ENCODE measurements at regions of chr12 and their contacts with region 1.

Region 1: GRCh38 chr12:54214553-54215406 is 26.0 kb upstream of the SMUG1 start:
- DNase-seq: peak; percentile 93
- H3K4me3 Mint-ChIP-seq: peak overlapping the region; percentile 85
- H3K27ac Mint-ChIP-seq: peak overlapping the region; percentile 68
- H3K4me1 Mint-ChIP-seq: peaks cover 47% of the 10 kb centered on the region
- H3K27me3 Mint-ChIP-seq: peaks cover 22% of the 10 kb centered on the region

Region 2: GRCh38 chr12:54005853-54006686 is 208.7 kb before region 1 on chr12:
- CTCF ChIA-PET with region 1: interaction called, 57 read pairs
- POLR2A ChIA-PET with region 1: interaction called, 3 read pairs
- DNase-seq: peak; percentile 85
- H3K4me3 Mint-ChIP-seq: peak overlapping the region; percentile 66
- H3K27ac Mint-ChIP-seq: no peak overlapping the region
- H3K4me1 Mint-ChIP-seq: peaks cover 25% of the 10 kb centered on the region
- H3K27me3 Mint-ChIP-seq: peaks cover 95% of the 10 kb centered on the region

Region 3: GRCh38 chr12:54147186-54147585 is 67.6 kb before region 1 on chr12:
- CTCF ChIA-PET with region 1: no interaction called
- POLR2A ChIA-PET with region 1: no interaction called
- DNase-seq: no peak
- H3K4me3 Mint-ChIP-seq: no peak overlapping the region
- H3K27ac Mint-ChIP-seq: no peak overlapping the region
- H3K4me1 Mint-ChIP-seq: no peaks in the 10 kb centered on the region
- H3K27me3 Mint-ChIP-seq: peaks cover 18% of the 10 kb centered on the region

Region 4: DNA sequence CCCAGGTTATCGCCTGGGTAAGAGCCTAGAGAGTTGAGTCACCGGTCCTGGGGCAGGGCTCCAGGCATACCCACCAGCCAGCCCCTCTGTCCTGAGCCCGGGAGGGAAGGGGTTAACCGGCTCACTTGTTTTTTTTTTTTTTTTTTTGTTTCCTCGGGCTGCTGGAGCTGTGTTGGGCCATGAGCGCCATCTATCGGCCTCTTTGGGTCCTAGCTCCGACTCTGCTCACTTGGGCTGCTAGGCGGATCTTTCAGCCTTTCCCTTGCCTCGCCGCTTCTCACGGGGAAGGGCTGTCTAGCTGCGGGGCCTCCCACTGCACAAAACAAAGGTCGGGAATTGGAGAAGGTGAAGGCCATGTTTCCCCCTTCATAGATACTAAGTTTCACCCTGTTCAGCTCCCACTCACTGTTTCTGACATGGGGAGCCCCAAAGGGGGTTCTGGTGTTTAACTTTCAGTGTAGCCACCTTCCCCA is 23.2 kb before region 1 on chr12:
- CTCF ChIA-PET with region 1: interaction called, 79 read pairs
- POLR2A ChIA-PET with region 1: no interaction called
- DNase-seq: peak; percentile 81
- H3K4me3 Mint-ChIP-seq: no peak overlapping the region
- H3K27ac Mint-ChIP-seq: no peak overlapping the region
- H3K4me1 Mint-ChIP-seq: peaks cover 24% of the 10 kb centered on the region
- H3K27me3 Mint-ChIP-seq: peaks cover 49% of the 10 kb centered on the region

Region 5: DNA sequence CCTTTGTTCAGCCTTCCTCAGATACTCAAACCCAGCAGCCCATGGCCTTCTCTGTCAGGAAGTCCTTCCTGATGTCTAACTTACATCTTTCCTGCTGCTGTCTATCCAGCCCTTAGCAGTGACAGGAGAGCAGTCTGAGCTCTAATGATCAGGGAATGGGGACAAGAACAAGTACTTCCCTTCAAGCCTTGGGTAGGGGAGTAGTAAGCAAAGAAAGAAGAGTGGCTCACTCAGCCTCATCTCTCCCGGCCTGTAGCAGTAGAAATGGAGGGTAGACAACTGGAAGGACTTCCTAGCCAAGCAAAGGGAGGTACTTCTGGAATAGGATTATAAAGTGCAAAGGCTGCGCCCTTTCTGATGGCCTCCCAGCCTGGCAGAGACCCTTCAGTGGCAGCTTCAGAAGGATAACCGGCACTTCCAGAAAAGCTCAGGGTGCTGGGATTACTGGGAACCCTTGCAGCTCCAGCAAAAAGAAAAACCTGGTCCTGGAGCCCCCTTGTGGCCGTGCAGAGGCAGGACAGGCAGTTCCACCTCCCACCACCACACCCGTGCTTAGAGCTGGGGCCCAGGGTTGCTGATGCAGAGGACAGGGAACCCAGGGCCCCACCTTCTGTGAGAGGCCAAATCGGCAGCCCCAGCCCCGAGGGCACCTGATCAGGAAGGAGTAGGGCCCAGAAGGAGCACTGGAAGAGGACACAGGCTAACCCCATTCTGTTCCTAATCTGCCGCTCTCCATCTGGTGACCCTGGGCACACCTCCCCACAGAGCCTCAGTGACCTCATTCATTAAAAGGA is 13.6 kb before region 1 on chr12:
- CTCF ChIA-PET with region 1: interaction called, 34 read pairs
- POLR2A ChIA-PET with region 1: no interaction called
- DNase-seq: peak; percentile 69
- H3K4me3 Mint-ChIP-seq: no peak overlapping the region
- H3K27ac Mint-ChIP-seq: no peak overlapping the region
- H3K4me1 Mint-ChIP-seq: peaks cover 4% of the 10 kb centered on the region
- H3K27me3 Mint-ChIP-seq: peaks cover 55% of the 10 kb centered on the region

Region 6: DNA sequence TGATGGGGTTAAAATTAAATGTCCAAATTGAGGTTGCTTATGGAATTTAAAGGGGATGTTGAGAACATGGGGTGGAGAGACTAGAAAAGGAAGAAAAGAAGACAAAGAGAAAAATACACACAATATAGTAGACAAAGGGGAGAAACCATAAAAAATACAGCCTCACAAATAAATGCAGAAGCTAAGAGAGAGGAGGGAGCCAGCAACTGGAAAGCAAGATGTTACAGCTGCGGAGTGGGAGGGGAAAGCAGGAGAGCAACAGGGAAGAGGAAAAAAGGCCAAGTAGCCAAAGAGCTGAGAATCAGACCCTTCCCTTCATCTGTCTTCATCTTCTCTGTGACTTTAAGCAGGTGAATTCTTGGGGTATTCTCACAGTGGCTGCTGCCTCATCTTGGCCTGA is 13.7 kb after region 1 on chr12:
- CTCF ChIA-PET with region 1: interaction called, 11 read pairs
- POLR2A ChIA-PET with region 1: interaction called, 3 read pairs
- DNase-seq: no peak
- H3K4me3 Mint-ChIP-seq: no peak overlapping the region
- H3K27ac Mint-ChIP-seq: no peak overlapping the region
- H3K4me1 Mint-ChIP-seq: peaks cover 10% of the 10 kb centered on the region
- H3K27me3 Mint-ChIP-seq: no peaks in the 10 kb centered on the region

Region 7: GRCh38 chr12:54240971-54241588 is 26.3 kb after region 1 on chr12:
- CTCF ChIA-PET with region 1: interaction called, 15 read pairs
- POLR2A ChIA-PET with region 1: interaction called, 4 read pairs
- DNase-seq: no peak
- H3K4me3 Mint-ChIP-seq: no peak overlapping the region
- H3K27ac Mint-ChIP-seq: peak overlapping the region; percentile 72
- H3K4me1 Mint-ChIP-seq: peaks cover 21% of the 10 kb centered on the region
- H3K27me3 Mint-ChIP-seq: no peaks in the 10 kb centered on the region

Region 8: DNA sequence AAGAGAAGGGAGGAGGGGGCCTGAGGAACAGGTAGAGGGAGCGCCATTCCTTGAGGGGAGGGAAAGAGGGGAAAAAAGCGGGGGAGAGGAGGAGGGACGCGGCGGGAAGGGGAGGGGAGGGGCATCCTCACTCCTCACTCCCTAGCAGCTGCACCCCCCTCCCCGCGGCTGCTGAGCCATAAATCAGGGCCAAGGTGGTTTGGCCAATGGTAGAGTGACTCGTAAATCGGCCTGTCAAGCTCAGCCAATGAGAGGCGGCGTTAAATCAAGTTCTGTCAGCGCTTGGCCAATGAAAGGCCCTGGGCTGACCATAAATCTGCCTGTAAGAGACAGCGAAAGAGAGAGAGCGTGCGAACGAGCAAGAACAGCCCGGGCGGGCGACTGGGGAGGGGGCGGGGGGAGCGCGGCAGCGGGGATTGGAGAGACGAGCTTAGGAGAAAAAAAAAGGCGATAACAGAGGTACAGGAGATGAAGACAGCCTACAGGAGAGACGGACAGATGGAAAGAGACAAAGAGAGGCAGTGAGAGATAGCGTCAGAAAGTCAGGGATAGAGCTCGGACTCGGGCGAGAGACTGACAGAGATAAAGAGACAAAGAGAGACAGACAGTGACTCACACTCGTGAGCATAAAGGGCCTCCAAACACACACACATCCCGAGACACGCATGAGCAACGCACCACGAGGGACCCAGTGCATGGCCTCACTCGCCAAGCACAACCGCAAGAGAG is 144.4 kb after region 1 on chr12:
- CTCF ChIA-PET with region 1: interaction called, 18 read pairs
- POLR2A ChIA-PET with region 1: interaction called, 4 read pairs
- DNase-seq: peak; percentile 97
- H3K4me3 Mint-ChIP-seq: no peak overlapping the region
- H3K27ac Mint-ChIP-seq: no peak overlapping the region
- H3K4me1 Mint-ChIP-seq: peaks cover 23% of the 10 kb centered on the region
- H3K27me3 Mint-ChIP-seq: no peaks in the 10 kb centered on the region

Region 9: DNA sequence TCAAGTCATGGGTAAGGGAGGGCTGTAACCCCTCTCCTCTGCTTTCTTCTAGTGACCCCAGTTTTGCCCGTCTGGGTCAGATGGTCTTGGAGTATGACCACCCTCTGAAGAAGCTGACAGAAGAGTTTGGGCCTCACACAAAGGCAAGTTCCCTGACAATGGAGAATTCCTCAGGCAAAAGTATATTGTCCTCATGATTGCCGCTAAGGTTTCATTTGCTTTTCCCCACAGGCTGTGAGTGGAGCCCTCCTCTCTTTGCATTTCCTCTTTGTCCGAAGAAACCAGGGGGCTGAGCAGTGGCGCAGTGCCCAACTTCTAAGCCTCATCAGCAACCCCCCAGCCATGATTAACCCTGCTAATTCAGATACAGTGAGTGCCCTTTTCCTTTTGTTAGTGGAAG is 294.8 kb after region 1 on chr12:
- CTCF ChIA-PET with region 1: no interaction called
- POLR2A ChIA-PET with region 1: no interaction called
- DNase-seq: no peak
- H3K4me3 Mint-ChIP-seq: no peak overlapping the region
- H3K27ac Mint-ChIP-seq: no peak overlapping the region
- H3K4me1 Mint-ChIP-seq: peaks cover 14% of the 10 kb centered on the region
- H3K27me3 Mint-ChIP-seq: no peaks in the 10 kb centered on the region